ENCODE measurements at regions of chr4 and their contacts with region 1.

Region 1: GRCh38 chr4:3531879-3532713 is at the start of gene LRPAP1:
- DNase-seq: peak; percentile 79
- H3K4me3 ChIP-seq: peak within 1 kb of the TSS; percentile 66 to 95 (median 88)
- H3K27ac ChIP-seq: no peak within 1 kb of the TSS
- H3K4me1 ChIP-seq: peaks cover 17% of the 10 kb centered on the region
- H3K27me3 ChIP-seq: no peaks in the 10 kb centered on the region
- CTCF ChIP-seq: no peak
- total RNA-seq, gene LRPAP1: 121 to 140 TPM

Region 2: DNA sequence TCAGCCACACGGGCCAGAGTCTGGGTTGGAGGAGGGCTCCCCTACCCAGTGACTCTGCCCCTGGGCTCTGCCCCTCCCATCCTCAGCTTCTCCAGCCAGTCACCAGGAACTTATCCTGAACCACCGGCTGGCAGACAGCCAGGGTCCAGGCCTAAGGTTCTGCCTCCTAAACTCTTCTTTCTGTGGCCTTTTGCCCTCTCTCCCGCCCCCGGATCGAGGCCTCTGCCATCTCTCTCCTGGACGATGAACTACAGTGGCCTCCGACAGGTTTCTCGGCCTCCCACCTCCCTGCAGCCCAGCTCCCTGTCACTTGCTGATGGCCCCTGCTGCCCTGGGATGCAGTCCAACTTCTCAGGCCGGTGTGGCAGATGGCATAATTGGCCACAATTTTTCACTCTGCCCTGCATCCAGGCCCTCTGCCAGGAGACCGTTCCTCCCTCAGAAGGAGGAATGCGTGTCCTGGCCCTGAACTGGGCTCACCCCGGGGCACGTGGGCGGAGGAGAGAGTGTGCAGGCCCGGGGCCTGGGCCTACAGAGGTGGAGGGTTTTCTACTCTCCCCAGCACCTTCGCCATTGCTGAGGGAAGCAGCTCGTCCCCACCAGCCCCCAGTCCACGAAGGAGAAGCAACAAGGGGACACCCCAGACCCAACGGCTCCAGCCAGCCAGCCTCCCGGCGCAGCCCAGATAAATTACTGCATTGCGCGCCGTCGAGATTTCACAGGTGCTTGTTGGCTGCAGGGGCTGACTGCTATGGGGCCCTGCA is 82.1 kb after region 1 on chr4:
- CTCF ChIA-PET with region 1: no interaction called
- dilution Hi-C with region 1: no loop called
- in situ Hi-C with region 1: no loop called
- intact Hi-C with region 1: no loop called
- DNase-seq: no peak
- H3K4me3 ChIP-seq: no peak overlapping the region
- H3K27ac ChIP-seq: no peak overlapping the region
- H3K4me1 ChIP-seq: no peaks in the 10 kb centered on the region
- H3K27me3 ChIP-seq: no peaks in the 10 kb centered on the region
- CTCF ChIP-seq: no peak

Region 3: DNA sequence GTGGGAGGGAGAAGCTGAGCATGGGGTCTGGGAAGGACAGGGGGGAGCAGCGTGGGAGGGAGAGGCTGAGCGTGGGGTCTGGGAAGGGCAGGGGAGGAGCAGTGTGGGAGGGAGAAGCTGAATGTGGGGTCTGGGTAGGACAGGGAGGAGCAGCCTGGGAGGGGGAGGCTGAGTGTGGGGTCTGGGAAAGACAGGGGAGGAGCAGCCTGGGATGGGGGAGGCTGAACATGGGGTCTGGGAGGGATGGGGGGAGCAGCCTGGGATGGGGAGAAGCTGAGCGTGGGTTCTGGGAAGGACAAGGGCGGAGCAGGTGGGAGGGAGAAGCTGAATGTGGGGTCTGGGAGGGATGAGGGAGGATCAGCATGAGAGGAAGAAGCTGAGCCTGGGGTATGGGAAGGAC is 92.4 kb after region 1 on chr4:
- CTCF ChIA-PET with region 1: no interaction called
- dilution Hi-C with region 1: no loop called
- in situ Hi-C with region 1: no loop called
- intact Hi-C with region 1: no loop called
- DNase-seq: no peak
- H3K4me3 ChIP-seq: no peak overlapping the region
- H3K27ac ChIP-seq: no peak overlapping the region
- H3K4me1 ChIP-seq: no peaks in the 10 kb centered on the region
- H3K27me3 ChIP-seq: peaks cover 2% of the 10 kb centered on the region
- CTCF ChIP-seq: no peak

Region 4: GRCh38 chr4:3945511-3946290 is 413.6 kb after region 1 on chr4:
- CTCF ChIA-PET with region 1: no interaction called
- dilution Hi-C with region 1: no loop called
- in situ Hi-C with region 1: no loop called
- intact Hi-C with region 1: loop called (anchors 10 kb)
- DNase-seq: no peak
- H3K4me3 ChIP-seq: no peak overlapping the region
- H3K27ac ChIP-seq: no peak overlapping the region
- H3K4me1 ChIP-seq: no peaks in the 10 kb centered on the region
- H3K27me3 ChIP-seq: no peaks in the 10 kb centered on the region
- CTCF ChIP-seq: no peak

Measured in mammary epithelial cell (primary cell).